GM23248 (cell line): ENCODE measurements at regions of chr16 and their contacts with region 1.

Region 1: GRCh38 chr16:30070031-30070462 is 4.5 kb downstream of the ALDOA start:
- DNase-seq: no peak
- H3K4me3 ChIP-seq: peak overlapping the region; percentile 82
- H3K27ac ChIP-seq: peak overlapping the region; percentile 35
- H3K4me1 ChIP-seq: peaks cover 31% of the 10 kb centered on the region
- H3K27me3 ChIP-seq: no peaks in the 10 kb centered on the region

Region 2: GRCh38 chr16:30122604-30123160 is 52.6 kb after region 1 on chr16:
- in situ Hi-C with region 1: loop called (anchors 5 kb)
- DNase-seq: peak; percentile 40
- H3K4me3 ChIP-seq: peak overlapping the region; percentile 86
- H3K27ac ChIP-seq: 0 out of 2 replicates have a peak overlapping the region, but pooled peaks have one; percentile 25
- H3K4me1 ChIP-seq: peaks cover 14% of the 10 kb centered on the region
- H3K27me3 ChIP-seq: no peaks in the 10 kb centered on the region

Region 3: DNA sequence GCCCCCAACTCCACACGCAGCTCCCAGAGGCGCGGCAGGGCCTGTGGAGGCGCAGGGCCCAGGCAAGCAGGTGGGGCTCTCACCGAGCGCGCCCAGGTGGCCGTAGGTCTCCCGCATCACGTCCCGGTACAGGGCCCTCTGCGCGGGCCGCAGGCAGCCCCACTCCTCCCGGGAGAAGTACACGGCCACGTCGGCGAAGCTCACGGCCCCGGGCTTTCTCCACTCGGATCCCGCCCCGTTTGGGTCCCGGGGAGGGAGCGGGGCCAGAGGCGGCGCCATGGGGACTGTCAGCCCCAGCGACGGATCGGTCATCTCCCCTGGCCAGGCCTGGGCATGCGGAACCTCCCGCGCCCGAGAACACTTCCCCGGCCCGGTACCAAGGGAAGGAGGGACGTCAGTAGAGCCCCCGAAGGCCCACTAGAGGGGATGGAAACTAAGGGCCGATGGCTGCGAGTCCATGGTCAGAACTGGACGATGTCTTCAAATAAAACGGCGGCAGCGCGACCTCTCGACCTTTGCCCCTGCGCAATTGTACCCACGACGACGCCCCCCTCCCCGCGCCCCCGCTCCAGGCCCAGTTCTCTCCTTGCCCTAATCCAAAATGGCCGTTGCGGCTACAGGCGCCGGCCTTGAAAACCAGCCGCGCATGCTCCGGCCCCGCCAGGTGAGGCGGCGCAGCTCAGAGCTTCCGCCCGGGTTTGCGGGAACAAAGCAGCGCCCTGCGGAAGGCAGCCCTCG is 464.5 kb after region 1 on chr16 and contains the start of gene ZNF747:
- in situ Hi-C with region 1: no loop called
- DNase-seq: peak; percentile 88
- H3K4me3 ChIP-seq: peak within 1 kb of the TSS; percentile 80
- H3K27ac ChIP-seq: peak within 1 kb of the TSS; percentile 79
- H3K4me1 ChIP-seq: no peaks in the 10 kb centered on the region
- H3K27me3 ChIP-seq: no peaks in the 10 kb centered on the region
- total RNA-seq, gene ZNF747: 7.7 and 15.7 TPM in 2 replicates